Activated B cell treated with CpG ODN at 0.5 μM for 24 hours (primary cell): ENCODE measurements at regions of chr20 and their contacts with region 1.

Region 1: GRCh38 chr20:47591231-47591630 is 89.5 kb downstream of the NCOA3 start:
- DNase-seq: no peak
- ATAC-seq: no peak
- H3K4me3 Mint-ChIP-seq: no peak overlapping the region
- H3K27ac Mint-ChIP-seq: peak overlapping the region; percentile 35
- H3K4me1 Mint-ChIP-seq: peaks cover 31% of the 10 kb centered on the region
- H3K27me3 Mint-ChIP-seq: no peaks in the 10 kb centered on the region
- CTCF ChIP-seq: no peak

Region 2: GRCh38 chr20:47576516-47577033 is 14.7 kb before region 1 on chr20:
- CTCF ChIA-PET with region 1: no interaction called
- POLR2A ChIA-PET with region 1: no interaction called
- intact Hi-C with region 1: loop called (anchors 2 kb)
- DNase-seq: no peak
- ATAC-seq: peak; percentile 63
- H3K4me3 Mint-ChIP-seq: peak overlapping the region; percentile 71
- H3K27ac Mint-ChIP-seq: peak overlapping the region; percentile 80
- H3K4me1 Mint-ChIP-seq: peaks cover 91% of the 10 kb centered on the region
- H3K27me3 Mint-ChIP-seq: no peaks in the 10 kb centered on the region
- CTCF ChIP-seq: no peak

Region 3: GRCh38 chr20:47610247-47610944 is 19.2 kb after region 1 on chr20:
- CTCF ChIA-PET with region 1: no interaction called
- POLR2A ChIA-PET with region 1: interaction called, 3 read pairs
- intact Hi-C with region 1: loop called (anchors 2 kb)
- DNase-seq: no peak
- ATAC-seq: peak; percentile 91
- H3K4me3 Mint-ChIP-seq: peak overlapping the region; percentile 65
- H3K27ac Mint-ChIP-seq: peak overlapping the region; percentile 88
- H3K4me1 Mint-ChIP-seq: peaks cover 78% of the 10 kb centered on the region
- H3K27me3 Mint-ChIP-seq: no peaks in the 10 kb centered on the region
- CTCF ChIP-seq: no peak

Region 4: GRCh38 chr20:47767972-47768794 is 177.0 kb after region 1 on chr20:
- CTCF ChIA-PET with region 1: no interaction called
- POLR2A ChIA-PET with region 1: no interaction called
- intact Hi-C with region 1: no loop called
- DNase-seq: no peak
- ATAC-seq: no peak
- H3K4me3 Mint-ChIP-seq: no peak overlapping the region
- H3K27ac Mint-ChIP-seq: no peak overlapping the region
- H3K4me1 Mint-ChIP-seq: no peaks in the 10 kb centered on the region
- H3K27me3 Mint-ChIP-seq: peaks cover 23% of the 10 kb centered on the region
- CTCF ChIP-seq: no peak